CD4-positive, alpha-beta T cell (primary cell): ENCODE measurements at regions of chr7 and their contacts with region 1.

Region 1: GRCh38 chr7:92528188-92528957 is at the starts of genes PEX1 and RBM48:
- DNase-seq: peak; percentile 89 to 99 (median 94)
- ATAC-seq: peak; percentile 92
- H3K4me3 ChIP-seq: peak within 1 kb of the TSS; percentile 94
- H3K4me3 Mint-ChIP-seq: peak within 1 kb of the TSS; percentile 96
- H3K27ac ChIP-seq: peak within 1 kb of the TSS; percentile 86 to 97
- H3K27ac Mint-ChIP-seq: peak within 1 kb of the TSS; percentile 94
- H3K4me1 ChIP-seq: peaks cover 19% of the 10 kb centered on the region
- H3K4me1 Mint-ChIP-seq: peaks cover 52% of the 10 kb centered on the region
- H3K27me3 ChIP-seq: no peaks in the 10 kb centered on the region
- H3K27me3 Mint-ChIP-seq: no peaks in the 10 kb centered on the region
- CTCF ChIP-seq: peak; percentile 42
- total RNA-seq, gene PEX1: 19.7 to 20.7 TPM
- total RNA-seq, gene RBM48: 45.4 to 47.3 TPM

Region 2: DNA sequence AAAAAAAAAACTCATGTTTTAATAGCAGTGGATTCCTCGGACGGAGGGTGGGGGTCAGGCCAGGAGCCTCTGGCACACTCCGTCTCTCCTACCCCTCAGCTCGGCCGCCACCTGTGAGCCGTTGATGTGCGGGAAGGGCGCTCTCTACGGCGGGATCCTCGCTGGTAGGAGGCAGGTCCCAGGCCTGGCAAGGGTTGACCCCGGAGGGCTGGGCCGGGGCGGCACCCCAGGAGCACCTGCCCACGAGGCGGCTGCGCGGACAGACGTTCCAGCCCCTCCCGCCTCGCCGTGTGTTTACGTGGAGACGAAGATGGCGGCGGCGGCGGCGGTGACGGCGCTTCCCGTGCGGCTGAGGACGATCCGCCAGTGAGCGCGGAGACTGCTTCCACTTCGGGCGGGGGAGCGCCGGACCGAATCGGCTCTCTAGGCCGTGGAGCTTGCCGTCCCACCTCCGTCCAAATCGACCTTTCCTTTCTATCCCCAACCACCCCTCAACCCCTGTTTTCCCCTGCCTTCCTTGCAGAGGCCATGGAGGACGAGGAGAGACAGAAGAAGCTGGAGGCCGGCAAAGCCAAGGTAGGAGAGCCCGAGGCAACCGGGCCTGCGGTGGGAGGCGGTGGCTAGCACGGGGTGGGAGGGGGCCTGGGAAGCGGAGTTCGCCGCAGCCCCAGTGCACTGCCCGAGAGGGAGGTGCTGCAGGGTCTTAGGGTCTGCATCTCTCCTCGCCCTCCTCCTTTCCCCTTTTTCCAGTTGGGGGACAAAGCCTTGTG is 587.6 kb before region 1 on chr7 and contains the start of gene AKAP9:
- CTCF ChIA-PET with region 1: interaction called, 7 read pairs
- POLR2A ChIA-PET with region 1: interaction called, 13 read pairs
- intact Hi-C with region 1: loop called in 1 of 2 experiments (anchors 10 kb)
- DNase-seq: peak; percentile 77 to 94 (median 84)
- ATAC-seq: peak; percentile 88
- H3K4me3 ChIP-seq: peak within 1 kb of the TSS; percentile 96
- H3K4me3 Mint-ChIP-seq: peak within 1 kb of the TSS; percentile 90
- H3K27ac ChIP-seq: peak within 1 kb of the TSS; percentile 82 to 93
- H3K27ac Mint-ChIP-seq: peak within 1 kb of the TSS; percentile 92
- H3K4me1 ChIP-seq: peaks cover 25% of the 10 kb centered on the region
- H3K4me1 Mint-ChIP-seq: peaks cover 49% of the 10 kb centered on the region
- H3K27me3 ChIP-seq: no peaks in the 10 kb centered on the region
- H3K27me3 Mint-ChIP-seq: no peaks in the 10 kb centered on the region
- CTCF ChIP-seq: no peak
- total RNA-seq, gene AKAP9: 62.5 to 64.8 TPM

Region 3: DNA sequence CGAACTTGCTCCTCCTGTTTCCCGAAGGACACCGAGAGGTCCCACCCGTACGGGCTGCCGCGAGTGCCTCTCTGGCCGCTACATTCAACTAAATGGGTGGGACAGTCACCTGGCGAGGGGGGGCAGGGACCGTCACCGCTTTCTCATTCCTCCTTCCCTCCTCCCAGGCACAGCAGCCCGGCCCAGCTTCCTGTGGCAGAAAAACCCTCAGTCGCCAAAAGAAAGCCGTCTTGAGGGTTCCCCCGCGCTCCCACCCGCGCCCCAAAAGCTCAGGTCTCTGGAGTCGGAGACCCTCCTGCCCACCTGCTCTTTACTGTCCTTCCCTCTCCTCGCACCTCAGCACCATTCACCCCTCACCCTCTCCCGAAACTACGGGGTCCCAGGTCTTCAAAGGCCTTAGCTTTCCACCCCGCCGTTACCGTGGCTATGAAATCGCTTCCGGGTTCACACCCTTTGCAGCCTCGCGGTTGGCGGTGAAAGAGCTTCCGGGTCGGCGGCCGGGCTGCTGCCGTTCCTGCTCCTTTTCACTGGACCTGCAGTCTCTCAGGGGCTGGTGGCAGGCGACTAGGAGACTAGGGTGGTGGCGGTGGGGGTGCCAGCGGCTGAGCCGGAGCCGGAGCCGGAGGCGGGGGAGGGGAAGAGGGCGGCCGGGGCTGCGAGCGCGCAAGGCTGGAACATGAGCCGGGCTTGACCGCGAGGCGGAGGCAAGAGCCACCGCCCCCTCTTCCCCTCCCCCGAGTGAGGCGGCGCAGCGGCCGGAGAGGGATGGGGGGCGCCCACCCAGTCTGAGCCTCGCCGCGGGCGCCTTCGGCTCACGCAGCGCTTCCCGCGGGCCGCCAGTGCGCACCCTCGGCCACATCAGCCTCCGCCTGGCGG is 282.6 kb before region 1 on chr7 and contains the starts of genes ANKIB1 and KRIT1:
- CTCF ChIA-PET with region 1: no interaction called
- POLR2A ChIA-PET with region 1: interaction called, 35 read pairs
- intact Hi-C with region 1: loop called (anchors 5 to 10 kb)
- DNase-seq: peak; percentile 76 to 93 (median 81)
- ATAC-seq: peak; percentile 78
- H3K4me3 ChIP-seq: peak within 1 kb of the TSS; percentile 87
- H3K4me3 Mint-ChIP-seq: peak within 1 kb of the TSS; percentile 97
- H3K27ac ChIP-seq: peak within 1 kb of the TSS; percentile 86 to 96
- H3K27ac Mint-ChIP-seq: peak within 1 kb of the TSS; percentile 99
- H3K4me1 ChIP-seq: peaks cover 17% of the 10 kb centered on the region
- H3K4me1 Mint-ChIP-seq: peaks cover 61% of the 10 kb centered on the region
- H3K27me3 ChIP-seq: no peaks in the 10 kb centered on the region
- H3K27me3 Mint-ChIP-seq: no peaks in the 10 kb centered on the region
- CTCF ChIP-seq: no peak
- total RNA-seq, gene ANKIB1: 60.0 to 66.9 TPM
- total RNA-seq, gene KRIT1: 28.6 to 28.7 TPM

Region 4: GRCh38 chr7:92584996-92585395 is 56.6 kb after region 1 on chr7:
- CTCF ChIA-PET with region 1: interaction called, 9 read pairs
- POLR2A ChIA-PET with region 1: interaction called, 24 read pairs
- intact Hi-C with region 1: loop called (anchors 1 to 2 kb)
- DNase-seq: peak in 4 of 14 experiments; percentile 6 to 50 (median 46)
- ATAC-seq: peak; percentile 33
- H3K4me3 ChIP-seq: no peak overlapping the region
- H3K4me3 Mint-ChIP-seq: peak overlapping the region; percentile 48
- H3K27ac ChIP-seq: no peak overlapping the region
- H3K27ac Mint-ChIP-seq: peak overlapping the region; percentile 70
- H3K4me1 ChIP-seq: peaks cover 26% of the 10 kb centered on the region
- H3K4me1 Mint-ChIP-seq: peaks cover 71% of the 10 kb centered on the region
- H3K27me3 ChIP-seq: no peaks in the 10 kb centered on the region
- H3K27me3 Mint-ChIP-seq: no peaks in the 10 kb centered on the region
- CTCF ChIP-seq: no peak

Region 5: DNA sequence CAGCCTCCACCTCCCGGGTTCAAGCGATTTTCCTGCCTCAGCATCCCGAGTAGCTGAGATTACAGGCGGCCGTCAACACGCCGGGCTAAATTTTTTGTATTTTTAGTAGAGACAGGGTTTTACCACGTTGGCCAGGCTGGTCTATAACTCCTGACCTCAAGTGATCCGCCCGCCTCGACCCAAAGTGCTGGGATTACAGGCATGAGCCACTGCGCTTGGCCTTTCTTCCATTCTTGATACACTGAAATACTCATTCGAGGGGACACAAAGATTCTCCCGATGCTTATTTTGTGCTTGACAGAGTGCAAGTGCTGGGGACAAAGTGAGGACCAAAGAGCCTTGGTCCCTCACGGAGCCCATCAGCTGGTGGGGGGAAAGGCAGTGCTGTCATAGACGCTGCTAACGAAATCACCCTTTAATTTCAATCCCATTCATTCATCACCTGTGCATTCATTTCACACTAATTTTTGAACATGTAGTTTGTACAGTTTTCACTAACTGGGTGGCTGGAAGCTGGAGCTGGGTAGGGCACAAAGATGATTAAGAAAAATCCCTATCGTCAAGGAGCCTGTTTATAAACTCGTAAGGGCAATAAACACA is 62.4 kb after region 1 on chr7:
- CTCF ChIA-PET with region 1: interaction called, 9 read pairs
- POLR2A ChIA-PET with region 1: interaction called, 24 read pairs
- intact Hi-C with region 1: loop called (anchors 1 to 2 kb)
- DNase-seq: peak in 3 of 14 experiments; percentile 6 to 24 (median 7)
- ATAC-seq: no peak
- H3K4me3 ChIP-seq: peak overlapping the region; percentile 85
- H3K4me3 Mint-ChIP-seq: peak overlapping the region; percentile 91
- H3K27ac ChIP-seq: no peak overlapping the region
- H3K27ac Mint-ChIP-seq: peak overlapping the region; percentile 95
- H3K4me1 ChIP-seq: peaks cover 30% of the 10 kb centered on the region
- H3K4me1 Mint-ChIP-seq: peaks cover 52% of the 10 kb centered on the region
- H3K27me3 ChIP-seq: no peaks in the 10 kb centered on the region
- H3K27me3 Mint-ChIP-seq: no peaks in the 10 kb centered on the region
- CTCF ChIP-seq: no peak

Region 6: GRCh38 chr7:92773808-92774207 is 245.4 kb after region 1 on chr7:
- CTCF ChIA-PET with region 1: no interaction called
- POLR2A ChIA-PET with region 1: no interaction called
- intact Hi-C with region 1: no loop called
- DNase-seq: no peak
- ATAC-seq: no peak
- H3K4me3 ChIP-seq: no peak overlapping the region
- H3K4me3 Mint-ChIP-seq: no peak overlapping the region
- H3K27ac ChIP-seq: no peak overlapping the region
- H3K27ac Mint-ChIP-seq: no peak overlapping the region
- H3K4me1 ChIP-seq: no peaks in the 10 kb centered on the region
- H3K4me1 Mint-ChIP-seq: no peaks in the 10 kb centered on the region
- H3K27me3 ChIP-seq: no peaks in the 10 kb centered on the region
- H3K27me3 Mint-ChIP-seq: no peaks in the 10 kb centered on the region
- CTCF ChIP-seq: no peak

Region 7: GRCh38 chr7:93055543-93056107 is 527.3 kb after region 1 on chr7:
- CTCF ChIA-PET with region 1: no interaction called
- POLR2A ChIA-PET with region 1: no interaction called
- intact Hi-C with region 1: loop called in 1 of 2 experiments (anchors 10 kb)
- DNase-seq: peak in 4 of 14 experiments; percentile 7 to 66 (median 62)
- ATAC-seq: peak; percentile 76
- H3K4me3 ChIP-seq: no peak overlapping the region
- H3K4me3 Mint-ChIP-seq: no peak overlapping the region
- H3K27ac ChIP-seq: no peak overlapping the region
- H3K27ac Mint-ChIP-seq: no peak overlapping the region
- H3K4me1 ChIP-seq: no peaks in the 10 kb centered on the region
- H3K4me1 Mint-ChIP-seq: no peaks in the 10 kb centered on the region
- H3K27me3 ChIP-seq: peaks cover 0 to 5% of the 10 kb centered on the region in 2 experiments
- H3K27me3 Mint-ChIP-seq: no peaks in the 10 kb centered on the region
- CTCF ChIP-seq: peak; percentile 93

Region 8: GRCh38 chr7:93747019-93747418 is 1218.6 kb after region 1 on chr7:
- CTCF ChIA-PET with region 1: no interaction called
- POLR2A ChIA-PET with region 1: no interaction called
- intact Hi-C with region 1: no loop called
- DNase-seq: no peak
- ATAC-seq: no peak
- H3K4me3 ChIP-seq: no peak overlapping the region
- H3K4me3 Mint-ChIP-seq: no peak overlapping the region
- H3K27ac ChIP-seq: no peak overlapping the region
- H3K27ac Mint-ChIP-seq: no peak overlapping the region
- H3K4me1 ChIP-seq: no peaks in the 10 kb centered on the region
- H3K4me1 Mint-ChIP-seq: no peaks in the 10 kb centered on the region
- H3K27me3 ChIP-seq: no peaks in the 10 kb centered on the region
- H3K27me3 Mint-ChIP-seq: no peaks in the 10 kb centered on the region
- CTCF ChIP-seq: no peak